Activated T-helper 1 cell treated with anti-CD3 and anti-CD28 coated beads, Interleukin-12 subunit alpha, Interleukin-12 subunit beta, Interleukin-2, Interleukin-4 antibody, amounts not matched to agents 30 ng/mL and 10 ng/mL and 1 ng/mL, durations not matched to agents 14 hours and 24 hours and 36 hours (primary cell): ENCODE measurements at regions of chr4 and their contacts with region 1.

Region 1: DNA sequence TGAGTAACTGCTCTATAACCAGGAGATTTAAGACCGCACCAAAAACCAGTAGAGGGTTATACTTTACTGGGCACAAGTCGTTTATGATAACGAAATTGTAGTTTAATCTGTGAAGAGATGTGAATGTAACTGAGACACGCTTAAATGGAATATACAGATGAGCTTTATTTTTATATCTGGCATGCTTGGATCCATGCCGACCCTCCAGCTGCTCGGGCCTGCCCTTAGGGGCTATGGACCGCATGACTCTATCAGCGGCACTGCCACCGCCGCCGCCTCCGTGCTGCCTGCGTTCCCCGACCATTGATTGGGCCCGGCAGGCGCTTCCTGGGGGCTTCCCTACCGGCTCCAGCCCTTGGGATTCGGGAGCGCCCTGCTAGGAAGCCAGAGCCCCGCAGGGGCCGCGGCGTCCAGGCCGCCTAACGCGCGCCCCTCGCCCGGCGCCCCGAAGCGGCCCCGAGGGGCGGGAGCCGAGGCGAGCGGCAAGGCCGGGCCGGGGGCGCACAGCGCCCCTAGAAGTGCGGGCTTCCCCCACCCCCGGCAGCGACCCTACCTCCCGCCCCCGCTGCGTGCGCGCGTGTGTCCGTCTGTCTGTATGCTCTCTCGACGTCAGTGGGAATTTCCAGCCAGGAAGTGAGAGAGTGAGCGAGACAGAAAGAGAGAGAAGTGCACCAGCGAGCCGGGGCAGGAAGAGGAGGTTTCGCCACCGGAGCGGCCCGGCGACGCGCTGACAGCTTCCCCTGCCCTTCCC is at the start of gene NFKB1:
- DNase-seq: peak; percentile 83
- H3K4me3 Mint-ChIP-seq: peak within 1 kb of the TSS; percentile 94
- H3K27ac Mint-ChIP-seq: peak within 1 kb of the TSS; percentile 91
- H3K4me1 Mint-ChIP-seq: peaks cover 33% of the 10 kb centered on the region
- H3K27me3 Mint-ChIP-seq: peaks cover 5% of the 10 kb centered on the region
- total RNA-seq, gene NFKB1: 139 and 145 TPM in 2 replicates

Region 2: DNA sequence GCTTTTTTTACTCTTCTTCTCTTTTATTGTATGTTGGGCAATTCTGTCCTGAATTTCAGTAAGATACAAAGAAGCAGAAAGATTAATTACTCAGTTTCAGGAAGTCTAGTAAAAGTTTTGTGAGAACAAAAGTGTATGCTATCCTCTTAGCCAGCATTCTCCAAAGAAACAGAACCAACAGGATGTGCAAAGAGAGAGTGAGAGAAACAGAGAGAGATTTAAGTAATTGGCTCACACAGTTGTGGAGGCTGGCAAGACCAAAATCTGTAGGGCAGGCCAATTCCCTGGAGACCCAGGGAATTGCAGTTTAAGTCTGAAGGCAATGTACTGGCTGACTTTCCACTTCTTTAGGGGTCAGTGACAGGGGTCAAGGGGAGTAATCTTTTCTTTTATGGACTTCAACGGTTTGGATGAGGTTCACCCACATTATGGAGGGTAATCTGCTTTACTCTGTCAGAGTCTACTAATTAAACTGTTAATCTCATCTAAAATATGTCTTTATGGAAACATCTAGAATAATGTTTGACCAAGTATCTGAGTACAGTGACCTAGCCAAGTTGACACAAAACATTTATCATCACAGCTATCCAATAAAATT is 96.3 kb before region 1 on chr4:
- intact Hi-C with region 1: no loop called
- DNase-seq: no peak
- H3K4me3 Mint-ChIP-seq: no peak overlapping the region
- H3K27ac Mint-ChIP-seq: no peak overlapping the region
- H3K4me1 Mint-ChIP-seq: no peaks in the 10 kb centered on the region
- H3K27me3 Mint-ChIP-seq: peaks cover 4% of the 10 kb centered on the region

Region 3: DNA sequence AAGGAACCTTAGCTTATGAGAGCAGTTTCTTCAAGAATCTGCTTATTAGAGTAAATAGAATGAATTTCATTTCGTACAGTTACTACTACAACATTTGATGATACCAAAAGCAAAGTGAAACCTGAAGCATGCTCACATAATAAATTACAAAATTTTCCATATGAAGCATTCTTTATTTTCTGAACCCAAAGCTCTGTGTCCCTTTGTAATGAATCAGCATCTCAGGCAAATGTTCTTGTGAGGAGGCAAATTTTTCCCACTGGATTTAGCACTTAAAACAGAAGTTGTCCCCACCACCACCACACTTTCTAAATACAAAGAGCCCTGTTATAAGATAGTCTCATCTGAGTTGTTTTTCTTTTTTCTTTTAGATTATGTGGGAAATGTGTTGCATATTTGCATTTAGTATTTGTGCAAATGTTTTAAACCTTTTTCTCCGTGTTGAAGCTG is 70.4 kb before region 1 on chr4:
- intact Hi-C with region 1: loop called (anchors 1 kb)
- DNase-seq: no peak
- H3K4me3 Mint-ChIP-seq: peak overlapping the region; percentile 87
- H3K27ac Mint-ChIP-seq: peak overlapping the region; percentile 82
- H3K4me1 Mint-ChIP-seq: peaks cover 15% of the 10 kb centered on the region
- H3K27me3 Mint-ChIP-seq: peaks cover 5% of the 10 kb centered on the region

Region 4: DNA sequence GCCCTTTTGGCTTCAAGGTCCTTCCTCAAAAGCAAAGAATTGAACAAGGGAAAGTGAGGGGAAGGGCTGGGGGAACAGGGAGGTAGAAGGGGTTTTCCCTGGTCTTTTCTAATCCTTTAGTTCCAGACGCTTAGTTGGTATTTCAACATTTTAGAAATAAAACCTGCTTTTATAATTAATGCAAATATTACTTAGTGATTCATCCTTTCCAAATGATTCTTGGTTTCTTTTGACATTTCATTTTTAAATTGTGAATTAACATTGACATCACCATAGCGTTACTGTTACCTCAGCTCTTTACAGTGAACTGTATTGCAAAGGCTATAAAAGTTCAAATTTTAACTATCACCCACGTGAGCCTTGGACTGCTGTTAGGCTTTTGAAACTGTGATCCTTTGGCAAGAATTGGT is 21.2 kb after region 1 on chr4:
- intact Hi-C with region 1: loop called (anchors 1 kb)
- DNase-seq: no peak
- H3K4me3 Mint-ChIP-seq: no peak overlapping the region
- H3K27ac Mint-ChIP-seq: peak overlapping the region; percentile 34
- H3K4me1 Mint-ChIP-seq: peaks cover 88% of the 10 kb centered on the region
- H3K27me3 Mint-ChIP-seq: no peaks in the 10 kb centered on the region

Region 5: DNA sequence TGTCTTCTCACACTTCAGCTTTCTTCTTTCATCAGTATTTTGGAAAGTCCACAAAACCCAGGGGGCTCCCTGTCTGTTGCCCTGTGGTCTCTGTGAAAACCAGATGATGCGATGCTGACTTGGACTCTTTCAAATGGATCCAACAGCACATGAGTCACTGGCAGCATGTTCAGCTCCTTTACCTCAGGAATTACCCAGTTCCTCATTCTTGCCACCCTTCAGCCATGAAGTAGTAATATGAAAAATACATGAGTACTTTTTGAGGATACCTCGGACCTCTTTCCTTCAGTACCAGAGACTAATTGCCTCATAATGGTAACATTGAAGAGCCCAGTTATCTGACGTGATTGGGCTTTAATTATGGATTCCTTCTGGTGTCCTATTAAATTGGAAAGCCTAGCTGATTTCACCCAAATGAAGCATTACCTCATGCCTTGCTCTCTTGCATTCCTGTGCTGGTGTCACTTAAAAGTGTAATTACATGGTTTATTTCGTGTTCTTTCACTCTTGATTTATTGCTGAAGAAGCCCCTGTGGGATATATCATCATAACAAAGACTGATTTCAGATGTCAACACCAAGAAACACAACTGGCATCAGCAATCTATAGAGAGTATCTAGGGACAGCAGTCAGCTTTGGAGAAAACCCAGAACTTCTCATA is 63.7 kb after region 1 on chr4:
- intact Hi-C with region 1: loop called (anchors 1 kb)
- DNase-seq: no peak
- H3K4me3 Mint-ChIP-seq: no peak overlapping the region
- H3K27ac Mint-ChIP-seq: peak overlapping the region; percentile 69
- H3K4me1 Mint-ChIP-seq: peaks cover 79% of the 10 kb centered on the region
- H3K27me3 Mint-ChIP-seq: no peaks in the 10 kb centered on the region

Region 6: DNA sequence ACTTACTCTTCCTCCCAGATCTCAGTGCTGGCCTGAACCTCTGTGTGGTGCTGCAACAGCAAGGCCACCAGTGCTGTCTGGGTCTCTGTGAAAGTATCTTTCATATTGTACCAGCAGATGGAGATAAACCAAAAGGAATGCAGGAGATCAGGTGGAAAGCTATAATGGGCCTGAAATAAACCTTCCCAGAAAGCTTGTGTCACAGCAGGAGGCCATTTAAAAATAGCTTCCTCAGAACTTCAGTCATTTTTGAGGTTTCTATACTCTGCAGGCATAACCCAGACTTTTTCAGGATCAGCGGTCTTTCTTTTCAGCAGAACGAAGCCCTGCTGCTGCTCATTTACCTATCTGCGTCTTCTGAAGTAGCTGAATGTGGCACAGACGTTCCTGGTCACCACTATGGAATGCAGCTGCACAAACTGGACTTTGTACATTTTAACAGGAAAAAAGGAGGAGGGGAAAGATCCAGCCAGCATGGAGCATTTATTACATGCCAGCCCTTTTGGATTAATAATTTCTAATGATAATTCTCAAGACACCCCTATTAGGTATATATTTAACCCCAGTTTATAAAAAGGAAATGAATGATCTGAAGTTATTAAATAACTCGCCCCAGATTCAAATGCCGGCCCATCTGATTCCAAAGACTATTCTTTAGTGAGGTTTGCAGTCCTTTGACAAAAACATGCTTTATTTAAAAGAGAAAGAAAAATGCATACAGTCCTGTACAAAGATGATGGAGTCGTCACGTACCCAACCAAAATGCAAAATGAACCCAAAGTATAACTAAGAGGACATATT is 120.0 kb after region 1 on chr4:
- intact Hi-C with region 1: loop called (anchors 2 kb)
- DNase-seq: no peak
- H3K4me3 Mint-ChIP-seq: no peak overlapping the region
- H3K27ac Mint-ChIP-seq: no peak overlapping the region
- H3K4me1 Mint-ChIP-seq: peaks cover 63% of the 10 kb centered on the region
- H3K27me3 Mint-ChIP-seq: no peaks in the 10 kb centered on the region

Region 7: DNA sequence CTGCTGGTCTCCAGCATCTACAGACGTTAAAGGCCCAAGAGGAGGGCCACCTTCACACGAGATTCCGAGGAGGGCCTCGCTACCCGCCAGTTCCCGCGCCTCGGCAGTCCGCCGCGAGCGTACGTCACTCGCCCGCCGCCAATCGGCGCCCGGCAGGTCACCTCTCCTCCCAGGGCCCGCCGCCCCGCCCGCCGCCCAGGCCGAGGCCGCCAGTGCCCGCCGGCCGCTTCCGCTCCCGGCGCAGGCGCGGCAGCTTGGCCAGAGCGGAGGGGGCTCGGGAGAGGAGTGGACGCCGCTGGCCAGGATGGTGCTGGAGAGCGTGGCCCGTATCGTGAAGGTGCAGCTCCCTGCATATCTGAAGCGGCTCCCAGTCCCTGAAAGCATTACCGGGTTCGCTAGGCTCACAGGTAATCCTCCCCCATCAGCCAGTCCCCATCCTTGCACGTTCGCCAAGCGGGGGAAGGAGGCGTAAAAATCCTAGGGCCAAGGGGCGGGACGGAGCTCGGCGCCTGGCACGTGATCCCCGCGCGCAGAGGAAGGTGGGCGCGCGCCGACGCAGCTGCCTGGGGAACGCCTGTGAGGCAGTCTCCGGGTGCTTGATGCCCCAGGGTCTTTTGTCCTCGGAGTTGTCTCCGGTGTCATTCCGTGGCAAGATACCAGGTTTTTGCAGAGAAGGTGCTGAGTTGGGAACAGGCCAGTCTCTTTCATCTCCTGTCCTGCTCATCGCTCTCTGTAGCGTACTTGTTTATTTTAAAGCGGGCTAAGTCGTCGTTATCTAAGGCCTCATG is 368.1 kb after region 1 on chr4 and contains the start of gene CISD2:
- intact Hi-C with region 1: loop called (anchors 1 kb)
- DNase-seq: peak; percentile 91
- H3K4me3 Mint-ChIP-seq: peak within 1 kb of the TSS; percentile 93
- H3K27ac Mint-ChIP-seq: peak within 1 kb of the TSS; percentile 99
- H3K4me1 Mint-ChIP-seq: peaks cover 69% of the 10 kb centered on the region
- H3K27me3 Mint-ChIP-seq: no peaks in the 10 kb centered on the region
- total RNA-seq, gene CISD2: 41.2 and 50.7 TPM in 2 replicates

Region 8: GRCh38 chr4:103091601-103092223 is 590.8 kb after region 1 on chr4:
- intact Hi-C with region 1: loop called (anchors 5 kb)
- DNase-seq: peak; percentile 27
- H3K4me3 Mint-ChIP-seq: peak overlapping the region; percentile 71
- H3K27ac Mint-ChIP-seq: peak overlapping the region; percentile 73
- H3K4me1 Mint-ChIP-seq: peaks cover 26% of the 10 kb centered on the region
- H3K27me3 Mint-ChIP-seq: no peaks in the 10 kb centered on the region